ENCODE measurements at regions of chr9 and their contacts with region 1.

Region 1: GRCh38 chr9:33225319-33226149 is 14.4 kb upstream of the SPINK4 start:
- DNase-seq: peak; percentile 25
- H3K4me3 ChIP-seq: no peak overlapping the region
- H3K27me3 ChIP-seq: peaks cover 2% of the 10 kb centered on the region; the same call in 1 of the 2 replicates
- CTCF ChIP-seq: peak; percentile 57

Region 2: DNA sequence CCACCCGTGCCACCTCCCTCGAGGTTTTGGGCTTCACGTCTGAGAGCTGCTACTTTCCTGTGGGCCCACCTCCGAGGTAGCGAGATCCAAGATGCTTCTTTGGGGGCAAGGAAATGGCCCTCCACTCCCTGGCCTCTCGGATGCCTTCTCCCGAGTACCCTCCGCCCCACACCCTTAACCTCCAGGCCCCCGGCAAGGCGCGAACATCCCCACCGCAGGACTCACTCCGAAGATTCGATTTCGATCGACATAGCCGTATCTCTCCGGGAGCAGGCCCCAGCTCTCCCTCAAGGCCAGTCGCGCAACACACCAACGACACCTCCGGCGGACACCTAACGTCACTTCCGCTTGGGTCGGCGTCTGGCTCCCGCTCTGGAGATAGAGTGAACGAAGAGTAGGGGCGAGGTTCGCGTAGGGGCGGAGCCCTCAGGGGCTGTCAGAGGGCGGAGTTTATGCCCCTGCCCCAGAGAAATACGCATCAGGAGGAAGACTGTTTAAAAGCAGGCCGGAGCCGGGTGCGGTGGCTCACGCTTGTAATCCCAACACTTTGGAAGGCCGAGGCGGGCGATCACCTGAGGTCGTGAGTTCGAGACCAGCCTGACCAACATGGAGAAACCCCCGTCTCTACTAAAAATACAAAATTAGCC is 149.1 kb before region 1 on chr9 and contains the start of gene SMU1:
- CTCF ChIA-PET with region 1: interaction called, 50 read pairs
- POLR2A ChIA-PET with region 1: interaction called, 4 read pairs
- DNase-seq: peak; percentile 89
- H3K4me3 ChIP-seq: peak within 1 kb of the TSS; percentile 61
- H3K27me3 ChIP-seq: no peaks in the 10 kb centered on the region
- CTCF ChIP-seq: no peak
- polyA plus RNA-seq, gene SMU1: 9.9 and 16.7 TPM in 2 replicates

Region 3: DNA sequence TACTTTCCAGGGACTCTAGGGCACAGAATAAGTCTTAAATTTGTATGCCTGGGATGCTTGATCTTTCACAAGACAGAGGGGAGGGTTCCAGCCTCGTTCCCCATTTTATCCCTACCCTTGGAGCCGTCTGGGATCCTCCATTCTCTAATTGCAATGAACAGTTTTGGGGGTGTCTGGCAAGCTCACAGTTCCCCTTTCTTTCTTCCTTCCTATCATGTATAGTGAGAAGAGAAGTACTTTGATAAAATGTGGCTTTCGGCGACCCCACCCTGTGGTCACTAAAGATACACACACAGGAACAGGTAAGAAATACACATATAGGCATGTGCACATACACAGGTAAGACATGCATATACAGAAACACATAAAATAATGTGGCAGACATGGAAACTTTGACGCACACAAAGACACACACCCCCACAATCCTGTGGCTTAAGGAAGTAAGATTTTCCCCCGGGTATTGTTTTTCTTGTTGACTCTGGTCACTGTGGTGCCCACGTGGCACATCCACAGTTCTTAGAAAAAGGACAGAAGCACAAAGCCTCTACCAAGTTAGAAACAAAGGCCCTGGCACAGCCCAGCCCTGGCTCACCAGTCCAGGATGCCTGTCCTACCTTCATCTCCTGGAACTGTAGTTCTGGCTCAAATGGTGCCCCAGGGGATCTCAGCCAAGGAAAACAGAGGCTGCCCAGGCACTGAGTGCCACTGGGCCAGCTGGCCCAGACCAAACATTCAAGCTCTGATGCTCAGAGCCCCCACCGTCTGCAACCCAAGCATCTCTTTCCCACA is 142.8 kb before region 1 on chr9:
- CTCF ChIA-PET with region 1: interaction called, 50 read pairs
- POLR2A ChIA-PET with region 1: no interaction called
- DNase-seq: no peak
- H3K4me3 ChIP-seq: no peak overlapping the region
- H3K27me3 ChIP-seq: no peaks in the 10 kb centered on the region
- CTCF ChIP-seq: no peak

Region 4: GRCh38 chr9:33167046-33167808 is 58.3 kb before region 1 on chr9 and contains the start of gene B4GALT1:
- CTCF ChIA-PET with region 1: interaction called, 10 read pairs
- POLR2A ChIA-PET with region 1: interaction called, 3 read pairs
- DNase-seq: peak; percentile 80
- H3K4me3 ChIP-seq: peak within 1 kb of the TSS; percentile 93
- H3K27me3 ChIP-seq: no peaks in the 10 kb centered on the region
- CTCF ChIP-seq: 0 out of 2 replicates have a peak, but pooled peaks have one; percentile 3
- polyA plus RNA-seq, gene B4GALT1: 82.0 and 85.6 TPM in 2 replicates

Region 5: GRCh38 chr9:33374634-33375213 is 149.2 kb after region 1 on chr9:
- CTCF ChIA-PET with region 1: no interaction called
- POLR2A ChIA-PET with region 1: no interaction called
- DNase-seq: peak; percentile 16
- H3K4me3 ChIP-seq: no peak overlapping the region
- H3K27me3 ChIP-seq: no peaks in the 10 kb centered on the region
- CTCF ChIP-seq: peak; percentile 93

Measured in BJ (cell line).